Mammary epithelial cell (primary cell): ENCODE measurements at regions of chr11 and their contacts with region 1.

Region 1: DNA sequence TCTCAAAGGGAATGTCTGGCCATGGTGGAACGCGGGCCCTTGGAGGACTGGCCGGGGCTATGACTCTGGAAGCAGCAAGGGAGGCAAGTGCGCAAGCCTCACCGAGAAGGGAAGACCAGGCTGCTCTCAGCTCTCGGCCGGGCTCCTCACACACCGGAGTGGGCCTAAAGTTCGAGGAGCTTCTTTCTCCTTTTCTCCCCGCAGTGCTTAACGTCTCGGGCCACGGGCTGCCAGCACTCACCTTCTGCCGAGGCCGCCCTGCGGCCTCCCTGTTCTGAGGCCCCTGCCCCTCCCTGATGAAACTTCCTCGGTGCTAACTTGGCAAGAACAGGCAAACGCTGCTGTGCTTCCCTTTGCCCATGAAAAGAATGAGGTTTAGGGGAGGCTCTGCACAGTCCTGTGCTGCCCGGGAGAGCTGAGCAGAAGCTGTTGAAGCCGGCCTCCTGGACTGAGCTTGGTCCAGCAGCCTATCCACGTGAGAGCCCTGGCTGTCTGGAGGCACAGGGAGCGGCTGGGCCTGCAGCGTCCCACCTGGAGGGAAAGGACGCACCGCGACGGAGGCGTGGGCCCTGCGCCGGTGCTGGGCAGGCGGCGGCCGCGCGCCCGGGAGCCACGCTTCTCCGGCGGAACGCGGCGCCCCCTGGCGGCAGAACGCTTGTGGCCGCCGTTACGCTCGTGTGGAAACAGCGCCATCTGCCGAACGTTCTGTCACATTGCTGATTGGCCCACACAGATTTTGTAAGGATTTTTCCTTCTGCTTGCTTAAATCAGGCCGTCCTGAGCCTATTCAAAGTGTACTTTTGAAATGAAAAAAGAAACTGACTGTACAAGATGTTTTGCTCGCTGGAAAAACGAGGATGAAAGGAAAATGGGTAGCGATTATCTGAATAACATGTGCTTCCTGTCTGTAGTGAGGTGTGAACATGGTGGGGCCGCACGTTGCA is 65.0 kb upstream of the TMEM45B start:
- DNase-seq: peak; percentile 55
- H3K4me3 ChIP-seq: peak overlapping the region in 1 of 3 experiments; percentile 34
- H3K27ac ChIP-seq: no peak overlapping the region
- H3K4me1 ChIP-seq: peaks cover 4% of the 10 kb centered on the region
- H3K27me3 ChIP-seq: peaks cover 18% of the 10 kb centered on the region
- CTCF ChIP-seq: peak; percentile 82 to 90

Region 2: GRCh38 chr11:129117595-129118350 is 632.8 kb before region 1 on chr11:
- CTCF ChIA-PET with region 1: no interaction called
- dilution Hi-C with region 1: no loop called
- in situ Hi-C with region 1: loop called in 1 of 2 experiments (anchors 25 kb)
- intact Hi-C with region 1: loop called (anchors 1 kb)
- DNase-seq: peak; percentile 42
- H3K4me3 ChIP-seq: no peak overlapping the region
- H3K27ac ChIP-seq: no peak overlapping the region
- H3K4me1 ChIP-seq: peaks cover 10% of the 10 kb centered on the region
- H3K27me3 ChIP-seq: no peaks in the 10 kb centered on the region
- CTCF ChIP-seq: peak; percentile 93 to 94

Region 3: GRCh38 chr11:129352676-129353075 is 397.9 kb before region 1 on chr11:
- CTCF ChIA-PET with region 1: no interaction called
- dilution Hi-C with region 1: loop called (anchors 5 kb)
- in situ Hi-C with region 1: no loop called
- intact Hi-C with region 1: no loop called
- DNase-seq: no peak
- H3K4me3 ChIP-seq: no peak overlapping the region
- H3K27ac ChIP-seq: no peak overlapping the region
- H3K4me1 ChIP-seq: no peaks in the 10 kb centered on the region
- H3K27me3 ChIP-seq: peaks cover 9% of the 10 kb centered on the region
- CTCF ChIP-seq: no peak

Region 4: DNA sequence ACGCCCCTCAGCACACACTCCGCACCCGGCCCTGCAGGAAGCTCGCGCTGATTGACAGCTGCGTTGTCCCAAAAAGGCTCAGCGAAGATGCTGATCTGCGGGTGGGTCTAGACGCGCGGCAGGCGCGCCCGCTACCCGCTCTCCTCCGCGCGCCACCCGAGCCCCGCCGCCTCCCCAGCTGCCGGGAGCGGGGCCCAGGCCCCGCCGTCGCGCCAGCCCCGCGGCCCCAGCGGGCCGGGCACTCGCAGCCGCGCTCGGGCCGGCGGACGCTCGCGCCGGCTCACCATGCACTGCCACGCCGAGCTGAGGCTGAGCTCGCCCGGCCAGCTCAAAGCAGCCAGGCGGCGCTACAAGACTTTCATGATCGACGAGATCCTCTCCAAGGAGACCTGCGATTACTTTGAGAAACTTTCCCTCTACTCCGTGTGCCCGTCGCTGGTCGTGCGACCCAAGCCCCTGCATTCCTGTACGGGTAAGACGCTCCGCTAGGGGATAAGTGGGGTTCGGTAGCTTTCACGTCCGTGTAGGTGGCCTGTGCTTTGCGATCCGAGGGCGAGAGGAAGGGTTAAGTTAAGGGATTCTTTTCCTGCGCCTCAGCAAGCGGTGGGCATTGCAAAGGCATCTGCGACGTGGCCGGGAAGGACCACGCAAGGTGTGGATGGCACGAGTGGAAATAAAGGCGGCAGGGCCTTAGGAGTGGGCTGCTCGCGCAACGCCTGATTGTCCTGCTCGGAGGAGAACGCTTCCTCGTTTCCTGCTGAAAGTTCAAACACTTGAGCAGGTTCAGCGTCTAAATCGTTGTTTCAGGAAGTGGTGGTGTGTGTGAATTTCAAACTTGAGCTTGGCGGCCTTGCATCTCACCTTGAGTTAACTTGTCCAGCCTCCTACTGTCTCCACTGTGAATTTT is 374.6 kb before region 1 on chr11 and contains the start of gene BARX2:
- CTCF ChIA-PET with region 1: interaction called, 3 read pairs
- dilution Hi-C with region 1: no loop called
- in situ Hi-C with region 1: no loop called
- intact Hi-C with region 1: loop called (anchors 1 kb)
- DNase-seq: peak; percentile 64
- H3K4me3 ChIP-seq: peak within 1 kb of the TSS in 2 of 3 experiments; percentile 25 to 41
- H3K27ac ChIP-seq: no peak within 1 kb of the TSS
- H3K4me1 ChIP-seq: peaks cover 18% of the 10 kb centered on the region
- H3K27me3 ChIP-seq: peaks cover 66% of the 10 kb centered on the region
- CTCF ChIP-seq: peak; percentile 37 to 83
- total RNA-seq, gene BARX2: 0.17 TPM in 1 of 2 donors, not detected in the other

Region 5: GRCh38 chr11:129695575-129696308 is 54.9 kb before region 1 on chr11:
- CTCF ChIA-PET with region 1: no interaction called
- dilution Hi-C with region 1: no loop called
- in situ Hi-C with region 1: no loop called
- intact Hi-C with region 1: loop called (anchors 1 kb)
- DNase-seq: peak; percentile 37
- H3K4me3 ChIP-seq: no peak overlapping the region
- H3K27ac ChIP-seq: no peak overlapping the region
- H3K4me1 ChIP-seq: no peaks in the 10 kb centered on the region
- H3K27me3 ChIP-seq: peaks cover 2% of the 10 kb centered on the region
- CTCF ChIP-seq: peak; percentile 55 to 82